Right ventricle myocardium superior (tissue), 1 donor: ENCODE measurements at regions of chr7 and their contacts with region 1.

Region 1: GRCh38 chr7:140596519-140597427 is 43.8 kb downstream of the DENND2A start:
- DNase-seq: no peak
- ATAC-seq: peak; percentile 39

Region 2: GRCh38 chr7:140533394-140533872 is 63.3 kb before region 1 on chr7:
- intact Hi-C with region 1: no loop called
- DNase-seq: peak; percentile 49
- ATAC-seq: peak; percentile 46

Region 3: GRCh38 chr7:140646931-140647647 is 50.3 kb after region 1 on chr7:
- intact Hi-C with region 1: loop called (anchors 10 kb)
- DNase-seq: no peak
- ATAC-seq: peak; percentile 42

Region 4: GRCh38 chr7:141251957-141252356 is 655.2 kb after region 1 on chr7:
- intact Hi-C with region 1: no loop called
- DNase-seq: no peak
- ATAC-seq: peak; percentile 66